ENCODE measurements at regions of chr5 and their contacts with region 1.

Region 1: GRCh38 chr5:44332285-44332971 is 56.8 kb downstream of the FGF10 start:
- DNase-seq: no peak
- ATAC-seq: no peak
- H3K4me3 Mint-ChIP-seq: no peak overlapping the region
- H3K27ac Mint-ChIP-seq: no peak overlapping the region
- H3K4me1 Mint-ChIP-seq: no peaks in the 10 kb centered on the region
- H3K27me3 Mint-ChIP-seq: no peaks in the 10 kb centered on the region

Region 2: DNA sequence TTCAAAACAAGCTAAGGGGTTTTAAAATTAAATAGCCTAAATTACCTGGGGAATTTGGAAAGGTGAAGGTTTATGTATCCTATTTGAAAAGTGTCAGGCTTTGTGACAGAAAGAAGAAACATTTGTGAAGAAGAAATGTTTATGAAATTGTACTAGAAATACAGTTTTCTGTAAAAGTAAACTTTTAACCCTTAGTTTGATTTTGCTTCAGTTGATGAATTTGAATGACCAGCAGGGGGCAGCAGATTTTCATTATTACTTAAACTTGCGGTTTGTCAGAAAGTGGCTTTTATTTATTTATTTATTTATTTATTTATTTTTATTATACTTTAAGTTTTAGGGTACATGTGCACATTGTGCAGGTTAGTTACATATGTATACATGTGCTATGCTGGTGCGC is 671.3 kb before region 1 on chr5:
- CTCF ChIA-PET with region 1: interaction called, 3 read pairs
- POLR2A ChIA-PET with region 1: no interaction called
- intact Hi-C with region 1: loop called in 1 of 2 experiments (anchors 10 kb)
- DNase-seq: peak; percentile 52
- ATAC-seq: no peak
- H3K4me3 Mint-ChIP-seq: no peak overlapping the region
- H3K27ac Mint-ChIP-seq: no peak overlapping the region
- H3K4me1 Mint-ChIP-seq: no peaks in the 10 kb centered on the region
- H3K27me3 Mint-ChIP-seq: no peaks in the 10 kb centered on the region

Region 3: GRCh38 chr5:43729846-43730478 is 602.5 kb before region 1 on chr5:
- CTCF ChIA-PET with region 1: interaction called, 3 read pairs
- POLR2A ChIA-PET with region 1: no interaction called
- intact Hi-C with region 1: loop called in 1 of 2 experiments (anchors 2 kb)
- DNase-seq: no peak
- ATAC-seq: no peak
- H3K4me3 Mint-ChIP-seq: no peak overlapping the region
- H3K27ac Mint-ChIP-seq: no peak overlapping the region
- H3K4me1 Mint-ChIP-seq: no peaks in the 10 kb centered on the region
- H3K27me3 Mint-ChIP-seq: peaks cover 17% of the 10 kb centered on the region

Region 4: GRCh38 chr5:43947870-43948269 is 384.6 kb before region 1 on chr5:
- CTCF ChIA-PET with region 1: no interaction called
- POLR2A ChIA-PET with region 1: no interaction called
- intact Hi-C with region 1: no loop called
- DNase-seq: no peak
- ATAC-seq: no peak
- H3K4me3 Mint-ChIP-seq: no peak overlapping the region
- H3K27ac Mint-ChIP-seq: no peak overlapping the region
- H3K4me1 Mint-ChIP-seq: no peaks in the 10 kb centered on the region
- H3K27me3 Mint-ChIP-seq: no peaks in the 10 kb centered on the region

Region 5: GRCh38 chr5:44747396-44747795 is 415.0 kb after region 1 on chr5:
- CTCF ChIA-PET with region 1: no interaction called
- POLR2A ChIA-PET with region 1: no interaction called
- intact Hi-C with region 1: no loop called
- DNase-seq: no peak
- ATAC-seq: no peak
- H3K4me3 Mint-ChIP-seq: no peak overlapping the region
- H3K27ac Mint-ChIP-seq: no peak overlapping the region
- H3K4me1 Mint-ChIP-seq: no peaks in the 10 kb centered on the region
- H3K27me3 Mint-ChIP-seq: peaks cover 3% of the 10 kb centered on the region